ENCODE measurements at regions of chr19 and their contacts with region 1.

Region 1: GRCh38 chr19:19053508-19054314 is 10.1 kb upstream of the SLC25A42 start:
- DNase-seq: peak; percentile 65
- H3K4me3 ChIP-seq: no peak overlapping the region
- H3K27ac ChIP-seq: no peak overlapping the region
- H3K4me1 ChIP-seq: no peaks in the 10 kb centered on the region
- H3K27me3 ChIP-seq: no peaks in the 10 kb centered on the region
- CTCF ChIP-seq: peak; percentile 66

Region 2: DNA sequence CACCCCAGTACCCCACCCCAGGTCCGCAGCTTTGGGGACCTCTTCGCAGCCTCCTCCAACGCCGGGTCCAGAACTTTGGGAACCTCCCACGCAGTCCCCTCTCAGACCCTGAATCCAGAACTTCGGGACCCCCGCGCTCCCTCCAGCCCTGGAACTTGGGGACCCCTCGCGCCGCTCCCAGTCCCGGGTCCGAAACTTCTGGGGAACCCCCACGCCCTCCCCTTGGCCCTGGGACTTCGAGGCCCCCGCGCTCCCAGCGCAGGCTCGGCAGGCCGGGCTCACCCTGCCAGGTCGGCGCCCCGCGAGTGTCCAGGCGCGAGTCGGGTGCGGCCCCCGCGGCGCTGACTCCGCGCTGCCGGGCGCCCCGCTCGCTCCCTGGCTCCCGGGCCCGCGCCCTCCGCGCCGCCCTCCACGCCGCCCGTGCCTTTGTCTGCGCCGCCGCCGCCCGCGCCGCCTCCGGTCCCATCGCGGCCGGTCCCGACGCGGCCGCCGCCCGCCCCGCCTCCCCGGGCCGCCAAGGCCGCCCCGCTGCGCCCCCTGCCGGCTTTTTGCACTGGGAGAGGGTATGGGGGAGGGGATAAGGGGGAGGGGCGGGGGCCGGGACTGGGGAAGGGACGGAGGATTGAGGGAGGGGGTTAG is 112.8 kb before region 1 on chr19 and contains the start of gene HOMER3:
- intact Hi-C with region 1: no loop called
- DNase-seq: peak; percentile 84
- H3K4me3 ChIP-seq: peak within 1 kb of the TSS; percentile 44
- H3K27ac ChIP-seq: no peak within 1 kb of the TSS
- H3K4me1 ChIP-seq: no peaks in the 10 kb centered on the region
- H3K27me3 ChIP-seq: peaks cover 5% of the 10 kb centered on the region
- CTCF ChIP-seq: no peak
- total RNA-seq, gene HOMER3: 1.9 to 5.3 TPM

Region 3: GRCh38 chr19:19139876-19140229 is 86.1 kb after region 1 on chr19:
- intact Hi-C with region 1: loop called (anchors 2 kb)
- DNase-seq: no peak
- H3K4me3 ChIP-seq: no peak overlapping the region
- H3K27ac ChIP-seq: no peak overlapping the region
- H3K4me1 ChIP-seq: no peaks in the 10 kb centered on the region
- H3K27me3 ChIP-seq: no peaks in the 10 kb centered on the region
- CTCF ChIP-seq: no peak